Motor neuron (in vitro differentiated cells): ENCODE measurements at regions of chr11 and their contacts with region 1.

Region 1: GRCh38 chr11:60363542-60364510 is 14.5 kb upstream of the MS4A7 start:
- ATAC-seq: peak; percentile 50 to 88 (median 77)
- H3K4me3 ChIP-seq: no peak overlapping the region
- H3K27ac ChIP-seq: no peak overlapping the region
- H3K4me1 ChIP-seq: no peaks in the 10 kb centered on the region

Region 2: DNA sequence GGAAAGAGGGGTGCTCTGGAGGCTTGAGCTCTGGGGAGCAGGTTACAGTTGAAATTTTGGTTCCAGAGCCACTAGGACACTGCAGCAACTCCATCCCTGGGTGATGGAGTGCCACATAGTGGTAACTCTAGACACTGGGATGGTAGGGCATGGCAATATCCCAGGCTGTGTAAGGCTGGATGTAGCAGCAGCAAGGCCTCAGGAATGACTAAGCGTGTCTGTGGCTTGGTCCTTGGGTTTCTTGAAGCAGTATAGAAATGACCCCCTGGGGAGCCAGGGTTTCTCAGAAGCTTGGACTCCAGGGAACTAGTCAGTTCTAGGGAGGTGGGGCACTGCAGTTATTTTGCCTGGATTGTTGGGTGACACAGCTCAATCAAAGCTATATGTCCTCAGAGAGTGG is 75.3 kb before region 1 on chr11:
- in situ Hi-C with region 1: no loop called
- ATAC-seq: no peak
- H3K4me3 ChIP-seq: no peak overlapping the region
- H3K27ac ChIP-seq: no peak overlapping the region
- H3K4me1 ChIP-seq: peaks cover 0 to 5% of the 10 kb centered on the region in 2 donors

Region 3: DNA sequence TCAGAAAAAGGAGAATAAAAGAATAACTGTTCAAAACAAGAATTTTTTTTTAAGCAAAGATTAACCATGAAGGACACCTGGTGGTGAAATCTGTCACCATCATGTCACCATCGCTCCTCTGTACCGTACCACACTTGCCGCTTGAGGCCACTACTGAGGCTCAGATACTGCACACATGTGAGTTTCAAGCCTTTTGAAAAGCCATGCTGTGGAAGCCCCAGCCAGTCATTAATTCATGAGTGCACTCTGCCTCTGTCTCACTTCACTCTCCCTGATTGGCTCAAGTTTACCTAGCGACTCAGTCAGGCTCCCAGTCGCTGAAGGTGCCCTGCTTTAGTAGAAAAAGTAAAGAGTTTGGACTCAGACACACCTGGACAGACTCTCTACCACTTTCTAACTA is 122.2 kb after region 1 on chr11:
- in situ Hi-C with region 1: loop called in 1 of 9 experiments (anchors 10 kb)
- ATAC-seq: peak in 2 of 8 experiments; percentile 85 to 99
- H3K4me3 ChIP-seq: no peak overlapping the region
- H3K27ac ChIP-seq: no peak overlapping the region
- H3K4me1 ChIP-seq: no peaks in the 10 kb centered on the region

Region 4: GRCh38 chr11:60607483-60607882 is 243.7 kb after region 1 on chr11:
- in situ Hi-C with region 1: loop called in 4 of 9 experiments (anchors 25 kb)
- ATAC-seq: no peak
- H3K4me3 ChIP-seq: no peak overlapping the region
- H3K27ac ChIP-seq: no peak overlapping the region
- H3K4me1 ChIP-seq: no peaks in the 10 kb centered on the region